ENCODE measurements at regions of chr22 and their contacts with region 1.

Region 1: GRCh38 chr22:50276143-50276542 is 6.0 kb upstream of the MAPK11 start:
- DNase-seq: peak; percentile 85
- ATAC-seq: peak; percentile 82

Region 2: DNA sequence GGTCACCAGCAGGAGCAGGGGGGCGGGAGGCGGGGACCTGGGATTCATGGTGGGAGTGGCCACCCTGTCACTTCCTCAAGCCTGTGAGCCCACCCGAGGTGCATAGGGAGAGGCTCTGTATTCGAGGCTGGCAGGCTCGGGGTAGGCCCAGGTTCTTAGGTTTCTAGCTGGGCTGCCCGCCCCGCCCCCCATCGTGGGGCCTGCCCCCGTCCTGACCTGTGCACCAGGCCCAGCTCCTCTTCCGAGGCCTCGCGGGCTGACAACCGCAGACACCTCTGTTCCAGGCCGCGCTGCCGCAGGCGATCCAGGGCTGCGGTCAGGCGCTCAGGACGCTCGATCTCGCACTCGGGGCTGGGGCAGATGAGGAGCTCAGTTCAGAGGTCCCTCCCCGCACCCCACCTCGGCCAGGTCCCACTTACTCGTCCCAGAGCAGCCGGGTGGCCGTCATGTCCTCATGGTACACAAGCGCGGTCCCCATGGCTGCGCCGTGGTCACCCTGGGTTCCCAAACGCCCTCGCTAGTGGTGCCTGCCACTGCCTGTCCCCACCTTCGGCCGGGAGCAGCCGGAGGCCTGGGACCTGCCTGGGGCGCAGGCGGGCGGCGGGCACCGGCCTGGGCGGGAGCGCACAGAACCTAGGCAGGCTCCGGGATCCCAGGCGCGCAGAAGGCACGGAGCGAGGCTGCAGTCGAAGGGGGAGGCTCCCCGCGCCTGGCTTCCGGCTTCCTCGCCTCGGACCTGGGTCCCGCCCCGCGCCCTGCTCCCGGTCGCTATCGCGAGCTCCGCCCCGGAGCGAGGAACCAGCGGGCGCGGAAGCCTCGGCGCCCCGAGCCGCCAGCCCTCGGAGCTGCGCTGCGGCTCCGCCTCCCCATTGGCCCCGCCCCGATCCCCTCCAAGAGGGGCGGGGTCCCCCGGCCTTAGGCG is 25.3 kb before region 1 on chr22 and contains the start of gene HDAC10:
- intact Hi-C with region 1: loop called (anchors 2 kb)
- DNase-seq: peak; percentile 93
- ATAC-seq: peak; percentile 80
- total RNA-seq, gene HDAC10: 14.5 TPM

Region 3: DNA sequence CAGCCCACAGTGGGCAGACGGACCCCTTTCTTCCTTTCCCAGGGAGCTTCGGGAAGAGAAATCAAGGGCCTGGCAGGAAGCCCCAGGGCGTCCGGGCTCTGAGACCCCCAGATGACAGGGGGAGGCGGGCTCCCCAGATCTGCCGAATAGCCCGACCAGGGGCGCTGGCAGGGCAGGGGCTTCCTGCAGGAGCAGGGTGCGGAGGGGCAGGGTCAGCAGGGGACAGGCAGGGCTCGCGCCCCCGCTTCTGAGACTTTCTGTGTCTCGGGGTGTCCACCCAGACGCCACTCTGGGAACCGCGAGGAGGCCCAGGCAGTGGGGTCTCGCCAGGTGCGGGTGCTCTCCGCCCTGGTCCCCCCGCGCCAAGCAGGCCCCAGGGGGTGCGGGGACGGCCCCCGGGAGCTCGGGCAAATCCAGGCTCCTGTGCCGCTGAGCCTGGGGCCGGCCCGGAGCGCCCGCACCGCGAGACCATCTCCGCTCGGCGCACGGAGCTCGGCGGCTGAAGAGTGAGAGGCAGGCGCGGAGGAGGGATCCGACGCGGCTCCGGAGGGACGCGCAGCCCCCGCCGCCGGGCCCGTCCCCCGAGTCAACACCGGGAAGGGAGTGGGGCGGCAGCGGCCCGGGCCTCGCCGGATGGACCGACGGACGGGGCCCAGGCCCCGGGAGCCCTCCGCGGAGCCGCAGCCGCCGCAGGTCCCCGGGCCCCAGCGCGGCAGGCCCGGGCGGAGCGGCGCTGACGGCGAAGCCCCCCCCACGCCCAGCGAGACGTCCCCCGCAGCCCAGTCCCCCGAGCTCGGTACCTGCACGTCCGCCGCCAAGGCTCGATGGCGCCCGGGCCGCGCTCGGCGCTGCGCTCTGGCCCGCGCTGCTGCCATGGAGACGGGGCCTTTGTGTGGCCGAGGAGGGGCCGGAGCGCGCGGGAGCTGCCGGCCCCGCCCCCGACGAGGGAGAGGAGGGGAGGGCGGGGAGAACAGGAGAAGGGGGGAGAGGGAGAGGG is 30.9 kb after region 1 on chr22 and contains the start of gene PLXNB2:
- intact Hi-C with region 1: loop called (anchors 5 kb)
- DNase-seq: peak; percentile 91
- ATAC-seq: peak; percentile 61
- total RNA-seq, gene PLXNB2: 70.6 TPM

Region 4: GRCh38 chr22:50326959-50327710 is 51.0 kb after region 1 on chr22 and contains the start of gene DENND6B:
- intact Hi-C with region 1: loop called (anchors 1 kb)
- DNase-seq: peak; percentile 95
- ATAC-seq: peak; percentile 97
- total RNA-seq, gene DENND6B: 1.7 TPM

Region 5: DNA sequence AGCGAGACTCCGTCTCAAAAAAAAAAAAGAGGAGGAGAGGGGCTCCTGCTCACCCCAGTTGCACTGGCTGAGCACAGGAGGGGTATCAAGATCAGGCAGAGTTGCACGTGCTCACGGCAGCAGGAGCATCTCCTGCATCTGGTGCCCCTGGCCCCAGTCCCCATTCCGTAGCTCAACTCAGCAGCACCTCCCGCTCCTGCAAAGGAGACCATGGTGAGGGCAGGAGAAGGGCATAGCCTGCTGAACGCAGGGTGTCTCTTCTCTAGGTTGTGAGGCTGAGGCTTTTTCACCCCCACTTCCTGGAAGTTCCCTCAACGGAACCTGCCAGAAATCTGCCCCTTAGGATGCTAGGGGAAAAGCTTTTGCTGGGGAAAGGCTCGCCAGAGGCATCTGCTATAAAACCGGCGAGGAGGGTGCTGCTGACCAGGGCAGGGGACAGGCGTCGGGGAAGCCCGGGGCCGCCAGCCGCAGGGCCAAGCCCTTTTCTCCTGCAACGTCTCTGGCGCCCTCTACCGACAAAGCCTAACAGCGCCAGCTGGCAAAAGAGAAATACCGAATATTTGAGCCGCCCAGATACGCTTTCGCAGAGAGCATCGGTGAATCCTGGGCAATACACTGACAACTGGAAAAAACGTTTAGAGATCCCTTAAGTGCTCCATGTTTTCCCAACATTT is 66.0 kb after region 1 on chr22:
- intact Hi-C with region 1: loop called (anchors 1 kb)
- DNase-seq: peak; percentile 91
- ATAC-seq: peak; percentile 85